Calu3 (cell line): ENCODE measurements at regions of chr7 and their contacts with region 1.

Region 1: DNA sequence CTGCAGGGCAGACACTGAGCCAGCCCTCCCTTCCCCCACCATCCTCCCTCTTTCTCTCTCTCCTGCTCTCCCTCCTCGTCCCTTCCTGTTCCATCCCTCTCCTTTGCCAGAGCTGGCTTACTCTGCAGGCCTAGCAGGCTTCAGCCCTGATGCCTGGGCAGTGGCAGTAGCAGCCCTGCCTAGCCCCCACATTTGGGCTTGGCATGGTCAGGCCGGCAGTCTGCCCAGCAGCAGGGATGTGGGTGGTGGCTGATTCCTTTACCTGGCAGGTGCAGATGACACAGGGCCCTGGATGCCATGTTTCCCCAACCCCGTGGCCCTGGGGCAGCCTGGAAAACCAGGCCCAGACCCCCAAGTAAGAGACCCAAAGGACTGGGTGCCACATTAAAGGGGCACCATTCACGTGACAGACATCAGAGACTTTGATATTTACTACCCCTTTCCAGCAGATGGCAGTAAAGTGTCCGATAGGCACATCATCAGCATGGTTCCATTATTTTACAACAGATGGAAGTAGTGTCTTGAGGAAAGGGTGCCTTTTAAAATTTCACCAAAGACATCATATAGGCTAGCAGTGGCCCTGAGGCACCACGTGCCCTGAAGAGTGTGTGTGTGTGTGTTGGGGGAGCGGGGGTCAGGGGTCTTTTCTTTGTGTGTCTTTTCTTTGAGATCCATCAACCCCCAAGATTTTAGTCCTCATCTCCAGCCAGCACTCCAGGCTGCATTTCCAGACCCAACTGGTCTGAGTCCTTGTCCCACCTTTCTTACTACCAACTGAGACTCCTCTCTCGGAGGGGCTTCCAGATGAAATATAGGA is 5.9 kb downstream of the KCP start:
- DNase-seq: no peak
- H3K4me3 Mint-ChIP-seq: no peak overlapping the region
- H3K27ac Mint-ChIP-seq: no peak overlapping the region
- H3K4me1 Mint-ChIP-seq: peaks cover 29% of the 10 kb centered on the region
- H3K27me3 Mint-ChIP-seq: peaks cover 23% of the 10 kb centered on the region
- CTCF ChIP-seq: peak; percentile 63

Region 2: DNA sequence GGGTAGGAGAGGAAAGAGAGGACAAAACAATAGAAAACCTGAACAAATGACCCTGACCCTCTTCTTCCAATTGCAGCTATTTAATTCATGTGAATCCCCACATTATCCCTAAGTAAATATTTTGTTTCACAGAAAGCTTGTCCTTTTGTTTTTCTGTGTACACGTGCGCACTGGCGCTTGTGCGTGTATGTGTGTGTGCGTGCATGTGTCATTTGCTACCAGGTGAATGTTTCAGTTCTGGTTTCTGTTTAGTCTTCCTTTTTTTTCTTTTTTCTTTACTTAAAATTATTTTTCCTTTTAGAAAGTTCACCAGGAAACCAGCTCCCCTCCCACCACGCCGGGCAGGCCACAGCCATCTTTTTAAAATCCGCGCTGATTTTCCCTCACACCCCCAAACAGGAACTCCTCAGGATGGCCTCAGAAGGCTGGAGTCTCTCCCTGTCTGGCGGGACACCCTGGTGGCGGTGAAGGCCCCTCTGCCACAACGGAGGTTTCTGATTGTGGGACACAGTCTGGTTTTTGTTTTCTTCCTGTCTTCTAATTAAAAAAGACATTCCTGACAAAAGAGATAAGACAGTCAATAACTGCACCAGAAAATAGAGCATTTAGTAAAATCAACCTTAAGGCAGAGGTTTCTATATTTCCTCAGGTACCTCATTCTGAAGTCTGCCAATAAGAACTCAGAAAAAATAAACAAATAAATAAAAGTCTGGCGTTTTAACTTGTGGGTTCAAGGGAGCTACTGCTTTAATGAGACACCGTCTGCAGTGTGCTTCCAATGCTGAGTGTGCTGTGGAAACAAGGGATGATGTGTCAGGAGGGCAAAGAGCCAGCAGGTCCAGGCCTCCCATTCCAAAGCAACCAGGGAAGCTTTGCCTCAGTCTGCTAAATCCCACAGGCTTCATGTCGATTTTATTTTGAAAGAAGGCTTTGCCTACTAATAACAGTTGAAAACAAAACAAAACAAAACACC is 50.5 kb after region 1 on chr7:
- CTCF ChIA-PET with region 1: no interaction called
- intact Hi-C with region 1: loop called (anchors 5 kb)
- DNase-seq: no peak
- H3K4me3 Mint-ChIP-seq: no peak overlapping the region
- H3K27ac Mint-ChIP-seq: no peak overlapping the region
- H3K4me1 Mint-ChIP-seq: peaks cover 11% of the 10 kb centered on the region
- H3K27me3 Mint-ChIP-seq: no peaks in the 10 kb centered on the region
- CTCF ChIP-seq: no peak